ENCODE measurements at regions of chr11 and their contacts with region 1.

Region 1: GRCh38 chr11:122617297-122617696 is 38.2 kb upstream of the UBASH3B start:
- DNase-seq: no peak
- H3K4me3 ChIP-seq: no peak overlapping the region
- H3K27me3 ChIP-seq: peaks cover 4% of the 10 kb centered on the region; the same call in 1 of the 2 replicates
- CTCF ChIP-seq: no peak

Region 2: GRCh38 chr11:122334546-122335339 is 282.6 kb before region 1 on chr11:
- CTCF ChIA-PET with region 1: no interaction called
- POLR2A ChIA-PET with region 1: no interaction called
- DNase-seq: no peak
- H3K4me3 ChIP-seq: no peak overlapping the region
- H3K27me3 ChIP-seq: no peaks in the 10 kb centered on the region; the same call in 1 of the 2 replicates
- CTCF ChIP-seq: no peak

Region 3: DNA sequence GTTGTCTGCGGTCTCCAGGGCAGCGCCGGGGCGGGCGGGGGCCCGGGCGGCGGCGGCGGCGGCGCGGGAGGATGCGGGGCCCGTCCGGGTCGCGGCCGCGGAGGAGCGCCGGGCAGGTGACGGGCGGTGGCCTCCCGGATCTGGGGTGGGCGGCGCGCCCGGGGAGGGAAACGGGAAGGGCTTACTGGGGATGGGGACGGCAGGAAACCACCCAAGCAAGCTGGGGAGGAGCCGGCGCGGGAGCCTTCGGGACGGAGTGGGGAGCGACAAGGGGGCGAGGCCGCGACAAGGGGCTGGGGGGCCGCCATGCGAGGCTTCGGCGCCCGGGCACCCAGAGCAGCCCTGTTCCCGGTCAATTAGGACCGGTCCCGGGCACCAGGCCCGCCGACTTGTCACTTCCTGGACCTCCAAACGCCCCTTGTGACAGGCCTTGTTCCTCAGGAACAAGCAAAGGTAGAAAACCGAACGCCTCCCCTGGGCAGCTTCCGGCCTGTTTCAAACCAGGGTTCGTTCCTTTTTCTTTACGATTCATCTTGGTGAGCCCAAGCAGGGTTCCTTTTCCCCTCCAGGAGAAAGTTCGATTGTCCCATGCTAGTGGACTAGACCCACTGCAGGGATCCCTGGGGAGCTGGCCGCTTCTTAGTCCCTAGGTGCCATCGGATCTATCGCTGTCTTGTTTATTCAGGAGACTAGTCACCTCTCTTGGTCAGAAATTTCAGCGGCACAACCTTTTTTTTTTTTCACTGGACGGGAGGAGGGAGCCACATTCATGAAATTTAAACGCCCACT is 265.8 kb after region 1 on chr11:
- CTCF ChIA-PET with region 1: no interaction called
- POLR2A ChIA-PET with region 1: interaction called, 20 read pairs
- DNase-seq: no peak
- H3K4me3 ChIP-seq: peak overlapping the region; percentile 67
- H3K27me3 ChIP-seq: peaks cover 2% of the 10 kb centered on the region; the same call in 1 of the 2 replicates
- CTCF ChIP-seq: no peak

Region 4: DNA sequence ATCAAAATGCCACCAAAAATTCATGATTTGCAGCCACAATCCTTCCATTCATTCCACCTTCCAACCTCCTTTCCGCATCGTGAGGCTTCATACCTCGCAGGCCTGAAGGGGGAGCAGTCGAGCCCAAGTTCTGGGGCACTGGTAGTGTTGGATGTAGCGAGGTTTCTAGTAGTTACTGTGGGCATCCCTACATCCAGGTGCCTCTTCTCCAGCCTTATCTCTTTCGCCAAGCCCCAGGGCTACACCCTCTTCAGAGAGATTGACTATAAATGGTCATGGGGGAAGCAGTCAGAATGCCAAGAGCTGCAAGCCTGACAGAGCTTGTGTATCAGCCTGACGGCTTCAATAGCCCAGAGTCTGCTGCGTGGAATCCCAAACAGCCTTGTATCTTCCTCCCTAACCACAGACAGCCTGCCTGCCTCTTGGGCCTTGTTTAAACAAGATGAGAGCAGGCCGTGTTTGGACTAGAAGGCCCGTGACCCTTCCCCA is 548.8 kb after region 1 on chr11:
- CTCF ChIA-PET with region 1: no interaction called
- POLR2A ChIA-PET with region 1: no interaction called
- DNase-seq: no peak
- H3K4me3 ChIP-seq: no peak overlapping the region
- H3K27me3 ChIP-seq: no peaks in the 10 kb centered on the region
- CTCF ChIP-seq: peak; percentile 66